ENCODE measurements at regions of chr17 and their contacts with region 1.

Region 1: DNA sequence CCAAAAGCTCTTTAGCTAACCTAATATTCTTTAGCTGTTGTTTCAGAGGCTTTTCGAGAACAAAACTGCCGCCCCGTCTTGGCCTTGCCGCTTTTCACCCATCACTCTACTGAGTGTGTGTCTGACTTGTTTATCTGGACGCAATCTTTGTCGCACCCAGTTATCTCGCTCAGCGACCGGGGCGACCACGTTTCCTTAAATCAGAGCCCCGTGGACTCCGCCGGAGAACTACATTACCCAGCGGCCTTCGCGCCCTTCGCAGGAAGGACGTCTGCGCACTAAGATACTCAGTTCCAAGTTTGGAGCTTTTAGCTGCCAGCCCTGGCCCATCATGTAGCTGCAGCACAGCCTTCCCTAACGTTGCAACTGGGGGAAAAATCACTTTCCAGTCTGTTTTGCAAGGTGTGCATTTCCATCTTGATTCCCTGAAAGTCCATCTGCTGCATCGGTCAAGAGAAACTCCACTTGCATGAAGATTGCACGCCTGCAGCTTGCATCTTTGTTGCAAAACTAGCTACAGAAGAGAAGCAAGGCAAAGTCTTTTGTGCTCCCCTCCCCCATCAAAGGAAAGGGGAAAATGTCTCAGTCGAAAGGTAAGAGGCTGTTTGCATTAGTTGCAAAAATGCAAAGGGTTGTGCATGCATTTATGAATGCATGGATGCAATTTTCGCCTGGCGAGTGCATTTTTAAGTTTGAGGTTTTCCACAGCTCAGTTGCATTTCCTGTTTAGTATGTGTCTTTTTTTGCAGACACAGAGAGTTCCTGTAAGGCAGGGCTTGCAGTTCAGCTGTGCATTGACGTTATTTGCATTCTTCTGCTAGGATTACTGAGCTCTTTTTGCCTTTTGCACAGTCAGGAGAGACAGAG is at the start of gene MAP2K6:
- DNase-seq: peak; percentile 75
- H3K4me3 ChIP-seq: peak within 1 kb of the TSS; percentile 37 to 42
- H3K27ac ChIP-seq: peak within 1 kb of the TSS in 1 of 2 donors; percentile 46
- H3K4me1 ChIP-seq: no peaks in the 10 kb centered on the region
- H3K27me3 ChIP-seq: no peaks in the 10 kb centered on the region
- CTCF ChIP-seq: no peak
- POLR2A ChIP-seq: no peak
- total RNA-seq, gene MAP2K6: 5.4 to 14.1 TPM

Region 2: DNA sequence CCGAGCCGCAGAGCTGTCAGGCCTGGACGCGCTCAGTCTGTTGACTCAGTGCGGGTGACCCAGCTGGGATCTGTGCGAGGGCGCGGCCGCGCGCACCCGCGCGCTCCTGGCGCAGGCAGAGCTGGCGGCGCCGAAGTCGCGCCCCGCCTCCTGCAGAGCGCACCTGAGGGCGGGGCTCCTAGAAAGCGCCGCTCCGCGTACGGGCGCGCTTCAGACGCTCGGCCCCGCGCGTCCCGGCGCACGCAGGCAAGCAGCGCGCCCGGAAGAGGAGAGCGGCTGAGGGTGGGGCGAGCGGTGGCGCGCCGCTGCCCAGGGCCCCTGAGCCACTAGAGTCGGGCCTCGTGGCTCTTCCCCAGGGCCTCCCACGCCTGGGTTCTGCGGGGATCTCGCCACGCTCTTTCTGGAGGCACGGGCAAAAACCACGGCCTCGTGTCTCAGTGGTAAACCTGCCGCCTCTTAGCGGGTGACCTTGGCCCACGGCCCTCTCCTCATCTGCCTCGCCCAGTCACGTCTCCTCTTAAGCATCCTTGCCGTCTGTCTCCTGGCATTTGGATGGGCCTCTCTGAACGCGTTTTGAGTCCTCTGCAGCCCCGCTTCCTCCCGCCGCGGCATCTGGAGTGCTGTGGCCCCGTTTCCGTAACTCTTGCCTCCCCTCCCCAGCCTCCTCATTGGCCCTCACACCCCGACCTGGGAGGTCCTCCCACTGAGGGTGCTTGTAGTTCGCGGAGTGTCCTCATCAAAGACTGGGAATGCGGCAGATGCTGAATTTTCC is 87.4 kb before region 1 on chr17 and contains the start of gene ABCA5:
- intact Hi-C with region 1: loop called (anchors 5 kb)
- DNase-seq: peak; percentile 90
- H3K4me3 ChIP-seq: peak within 1 kb of the TSS; percentile 62 to 86
- H3K27ac ChIP-seq: peak within 1 kb of the TSS; percentile 92 to 99
- H3K4me1 ChIP-seq: no peaks in the 10 kb centered on the region
- H3K27me3 ChIP-seq: no peaks in the 10 kb centered on the region
- CTCF ChIP-seq: no peak
- POLR2A ChIP-seq: peak; percentile 86
- total RNA-seq, gene ABCA5: 31.0 to 31.3 TPM

Region 3: GRCh38 chr17:69390795-69391501 is 23.7 kb before region 1 on chr17:
- intact Hi-C with region 1: no loop called
- DNase-seq: no peak
- H3K4me3 ChIP-seq: peak overlapping the region in 1 of 2 donors; percentile 23
- H3K27ac ChIP-seq: peak overlapping the region; percentile 26 to 47
- H3K4me1 ChIP-seq: no peaks in the 10 kb centered on the region
- H3K27me3 ChIP-seq: no peaks in the 10 kb centered on the region
- CTCF ChIP-seq: no peak
- POLR2A ChIP-seq: no peak